AG04450 (cell line): ENCODE measurements at regions of chr12 and their contacts with region 1.

Region 1: GRCh38 chr12:95858479-95859343 is at the start of gene SNRPF:
- DNase-seq: peak; percentile 93
- H3K4me3 ChIP-seq: peak within 1 kb of the TSS; percentile 80
- H3K27ac ChIP-seq: peak within 1 kb of the TSS; percentile 62
- H3K27me3 ChIP-seq: no peaks in the 10 kb centered on the region
- CTCF ChIP-seq: no peak; the same call in 1 of the 2 replicates
- polyA plus RNA-seq, gene SNRPF: 12.7 and 21.4 TPM in 2 replicates

Region 2: DNA sequence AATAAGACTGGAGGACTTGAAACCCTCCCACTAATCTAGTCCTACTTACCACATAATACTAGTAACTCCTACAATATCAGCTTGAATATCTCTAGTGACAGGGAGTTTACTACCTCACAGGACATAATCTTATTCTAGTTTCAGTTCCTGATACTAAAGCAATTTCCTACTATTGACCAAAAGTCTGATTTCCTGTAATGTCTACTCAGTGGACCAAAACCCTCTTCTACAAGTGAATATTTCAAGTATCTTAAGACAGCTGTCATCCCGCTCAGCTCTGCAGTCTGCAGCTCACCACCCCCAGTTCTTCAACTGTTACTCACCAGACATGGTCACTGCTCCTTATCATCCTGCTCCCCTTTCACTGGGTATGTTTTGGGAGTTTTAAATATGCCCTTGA is 1137.5 kb before region 1 on chr12:
- CTCF ChIA-PET with region 1: no interaction called
- POLR2A ChIA-PET with region 1: no interaction called
- DNase-seq: no peak
- H3K4me3 ChIP-seq: no peak overlapping the region
- H3K27ac ChIP-seq: no peak overlapping the region
- H3K27me3 ChIP-seq: peaks cover 13% of the 10 kb centered on the region
- CTCF ChIP-seq: no peak

Region 3: DNA sequence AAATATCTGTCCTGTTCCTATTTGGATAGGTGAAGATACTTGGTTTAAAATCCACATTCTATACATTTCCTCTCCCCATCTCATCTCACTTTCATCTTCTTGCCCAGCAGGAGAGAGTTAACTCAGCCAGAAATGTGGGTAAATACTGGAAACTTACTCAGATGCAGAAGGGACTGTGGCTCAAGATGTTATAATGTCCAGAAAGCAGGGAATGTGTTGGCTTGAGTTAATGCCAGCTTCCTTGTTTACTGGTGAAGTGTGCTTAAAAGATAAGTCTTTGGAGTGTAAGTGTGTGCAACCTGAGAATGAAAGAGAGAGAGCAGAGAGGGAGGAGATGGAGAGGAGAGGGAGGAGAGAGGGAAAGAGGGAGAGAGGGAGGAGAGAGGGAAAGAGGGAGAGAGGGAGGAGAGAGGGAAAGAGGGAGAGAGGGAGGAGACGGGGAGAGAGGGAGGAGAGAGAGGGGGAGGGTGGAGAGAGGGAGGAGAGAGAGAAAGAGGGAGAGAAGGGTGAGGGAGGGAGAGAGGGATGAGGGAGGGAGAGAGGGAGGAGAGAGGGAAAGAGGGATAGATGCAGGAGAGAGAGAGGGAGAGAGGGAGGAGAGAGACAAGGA is 22.0 kb before region 1 on chr12:
- CTCF ChIA-PET with region 1: no interaction called
- POLR2A ChIA-PET with region 1: interaction called, 10 read pairs
- DNase-seq: no peak
- H3K4me3 ChIP-seq: peak overlapping the region; percentile 29; the same call in 1 of the 2 replicates
- H3K27ac ChIP-seq: peak overlapping the region; percentile 4
- H3K27me3 ChIP-seq: no peaks in the 10 kb centered on the region
- CTCF ChIP-seq: no peak

Region 4: DNA sequence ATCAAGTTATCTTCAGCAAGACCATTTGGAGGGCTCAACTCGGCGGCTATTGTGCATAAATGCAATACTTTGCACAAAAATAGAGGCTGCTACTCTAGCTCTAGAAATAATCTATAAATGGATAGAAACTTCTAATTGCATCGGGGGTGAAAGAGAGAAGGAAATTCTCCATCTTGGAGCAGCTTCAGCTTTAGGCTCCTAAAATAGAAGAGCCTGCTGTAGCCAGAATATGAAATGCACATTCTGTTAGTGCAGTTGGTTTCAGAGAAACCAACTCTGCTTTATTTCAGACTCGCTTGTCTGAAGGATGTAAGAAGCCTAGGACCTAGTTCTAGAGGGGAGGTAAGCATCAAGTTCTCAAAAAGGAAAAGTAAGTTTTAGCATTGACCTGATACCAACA is 38.1 kb after region 1 on chr12:
- CTCF ChIA-PET with region 1: no interaction called
- POLR2A ChIA-PET with region 1: no interaction called
- DNase-seq: no peak
- H3K4me3 ChIP-seq: no peak overlapping the region
- H3K27ac ChIP-seq: no peak overlapping the region
- H3K27me3 ChIP-seq: no peaks in the 10 kb centered on the region
- CTCF ChIP-seq: no peak